Endothelial cell of umbilical vein (primary cell): ENCODE measurements at regions of chr3 and their contacts with region 1.

Region 1: GRCh38 chr3:169195672-169196071 is 467.8 kb downstream of the MECOM start:
- DNase-seq: peak; percentile 34
- H3K4me3 ChIP-seq: no peak overlapping the region
- H3K27ac ChIP-seq: no peak overlapping the region
- H3K4me1 ChIP-seq: peaks cover 5% of the 10 kb centered on the region
- H3K27me3 ChIP-seq: no peaks in the 10 kb centered on the region
- CTCF ChIP-seq: no peak
- POLR2A ChIP-seq: no peak

Region 2: GRCh38 chr3:169179722-169180121 is 15.9 kb before region 1 on chr3:
- CTCF ChIA-PET with region 1: interaction called, 11 read pairs
- POLR2A ChIA-PET with region 1: no interaction called
- dilution Hi-C with region 1: no loop called
- intact Hi-C with region 1: no loop called
- DNase-seq: no peak
- H3K4me3 ChIP-seq: no peak overlapping the region
- H3K27ac ChIP-seq: no peak overlapping the region
- H3K4me1 ChIP-seq: no peaks in the 10 kb centered on the region
- H3K27me3 ChIP-seq: no peaks in the 10 kb centered on the region
- CTCF ChIP-seq: no peak
- POLR2A ChIP-seq: no peak